H1 (cell line): ENCODE measurements at regions of chr15 and their contacts with region 1.

Region 1: DNA sequence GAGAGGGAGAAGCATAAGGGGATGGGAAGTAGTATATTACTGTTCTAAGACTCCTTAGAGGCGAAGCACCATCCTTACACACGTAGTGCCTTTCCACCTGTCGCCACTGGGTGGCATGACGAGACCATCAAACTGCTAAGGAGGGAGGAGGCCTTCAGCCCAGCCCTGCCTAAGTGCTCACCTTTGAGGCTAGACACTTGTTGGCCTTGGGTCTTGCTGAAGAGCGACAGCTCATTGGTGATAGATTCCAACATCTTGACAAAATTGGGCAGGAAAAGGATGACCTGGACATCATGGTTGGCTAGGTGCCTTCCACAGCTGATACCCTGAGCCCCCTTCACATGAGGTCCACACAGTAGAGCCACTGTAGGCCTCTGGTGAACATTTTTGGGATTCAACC is 19.6 kb downstream of the CLK3 start:
- DNase-seq: peak in 1 of 2 experiments; percentile 84
- H3K4me3 ChIP-seq: no peak overlapping the region
- H3K27ac ChIP-seq: no peak overlapping the region
- H3K4me1 ChIP-seq: no peaks in the 10 kb centered on the region
- H3K27me3 ChIP-seq: no peaks in the 10 kb centered on the region
- CTCF ChIP-seq: peak; percentile 92 to 97 (median 97)
- EP300 ChIP-seq: no peak
- POLR2A ChIP-seq: no peak
- RAD21 ChIP-seq: peak; percentile 97 to 98

Region 2: DNA sequence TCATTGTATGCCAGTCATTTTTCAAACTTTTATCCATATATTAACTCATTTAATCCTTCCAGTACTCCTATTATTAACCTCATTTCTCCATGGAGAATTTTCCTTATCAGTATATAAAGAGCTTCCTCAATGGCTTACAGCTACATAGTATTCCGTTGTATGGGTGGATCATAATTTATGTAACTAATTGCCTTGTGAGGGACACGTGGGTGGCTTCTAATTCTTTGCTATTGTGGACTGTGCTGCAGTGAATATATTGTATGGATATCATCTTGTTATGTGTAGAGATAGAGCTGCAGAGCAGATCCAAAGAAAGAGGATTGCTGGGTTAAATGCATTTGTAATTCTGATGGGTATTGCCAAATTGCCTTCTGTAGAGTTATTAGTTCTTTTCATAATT is 615.5 kb before region 1 on chr15:
- CTCF ChIA-PET with region 1: no interaction called
- POLR2A ChIA-PET with region 1: no interaction called
- DNase-seq: no peak
- H3K4me3 ChIP-seq: no peak overlapping the region
- H3K27ac ChIP-seq: no peak overlapping the region
- H3K4me1 ChIP-seq: no peaks in the 10 kb centered on the region
- H3K27me3 ChIP-seq: no peaks in the 10 kb centered on the region
- CTCF ChIP-seq: no peak
- EP300 ChIP-seq: no peak
- POLR2A ChIP-seq: no peak
- RAD21 ChIP-seq: no peak

Region 3: DNA sequence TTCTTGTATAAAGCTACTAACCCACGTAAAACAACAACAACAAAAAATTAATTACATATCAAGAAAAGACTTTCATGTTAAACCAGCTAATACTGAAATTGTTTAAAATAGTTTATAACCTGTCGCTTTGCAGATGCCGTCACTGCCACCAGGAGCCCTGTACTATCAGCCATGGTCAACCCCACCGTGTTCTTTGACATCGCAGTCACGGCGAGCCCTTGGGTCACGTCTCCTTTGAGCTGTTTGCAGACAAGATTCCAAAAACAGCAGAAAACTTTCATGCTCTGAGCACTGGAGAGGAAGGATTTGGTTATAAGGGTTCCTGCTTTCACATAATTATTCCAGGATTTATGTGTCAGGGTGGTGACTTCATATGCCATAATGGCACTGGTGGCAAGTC is 273.8 kb before region 1 on chr15:
- CTCF ChIA-PET with region 1: no interaction called
- POLR2A ChIA-PET with region 1: no interaction called
- DNase-seq: no peak
- H3K4me3 ChIP-seq: no peak overlapping the region
- H3K27ac ChIP-seq: no peak overlapping the region
- H3K4me1 ChIP-seq: peaks cover 6 to 23% (median 13%) of the 10 kb centered on the region in 4 experiments
- H3K27me3 ChIP-seq: peaks cover 0 to 12% (median 8%) of the 10 kb centered on the region in 4 experiments; a peak in 5 of 7 replicates
- CTCF ChIP-seq: no peak
- EP300 ChIP-seq: no peak
- POLR2A ChIP-seq: no peak
- RAD21 ChIP-seq: no peak

Region 4: GRCh38 chr15:74551714-74552113 is 83.5 kb before region 1 on chr15:
- CTCF ChIA-PET with region 1: no interaction called
- POLR2A ChIA-PET with region 1: no interaction called
- DNase-seq: no peak
- H3K4me3 ChIP-seq: no peak overlapping the region
- H3K27ac ChIP-seq: no peak overlapping the region
- H3K4me1 ChIP-seq: peaks cover 0 to under 1% (median 0%) of the 10 kb centered on the region in 4 experiments; a peak in 1 of 7 replicates
- H3K27me3 ChIP-seq: no peaks in the 10 kb centered on the region
- CTCF ChIP-seq: no peak
- EP300 ChIP-seq: no peak
- POLR2A ChIP-seq: no peak
- RAD21 ChIP-seq: no peak

Region 5: GRCh38 chr15:74615508-74616365 is 19.5 kb before region 1 on chr15 and contains the start of gene CLK3:
- CTCF ChIA-PET with region 1: interaction called, 538 read pairs
- POLR2A ChIA-PET with region 1: interaction called, 4 read pairs
- DNase-seq: peak; percentile 79 to 98
- H3K4me3 ChIP-seq: peak within 1 kb of the TSS; percentile 80 to 96 (median 84)
- H3K27ac ChIP-seq: peak within 1 kb of the TSS; percentile 68
- H3K4me1 ChIP-seq: peaks cover 0 to 5% (median 2%) of the 10 kb centered on the region in 4 experiments; a peak in 5 of 7 replicates
- H3K27me3 ChIP-seq: peaks cover 0 to 15% (median 11%) of the 10 kb centered on the region in 4 experiments; a peak in 4 of 7 replicates
- CTCF ChIP-seq: peak in 1 of 3 experiments; percentile 11; a peak in 1 of 4 replicates
- EP300 ChIP-seq: 0 out of 3 replicates have a peak, but pooled peaks of 1 of the 2 experiments have one; percentile 17
- POLR2A ChIP-seq: peak in 1 of 2 experiments; percentile 85; a peak in 2 of 3 replicates
- RAD21 ChIP-seq: peak in 1 of 2 experiments; percentile 14; a peak in 1 of 4 replicates
- total RNA-seq, gene CLK3: 42.4 and 43.5 TPM in 2 replicates

Region 6: GRCh38 chr15:74653426-74654123 is 18.3 kb after region 1 on chr15:
- CTCF ChIA-PET with region 1: interaction called, 538 read pairs
- POLR2A ChIA-PET with region 1: interaction called, 3 read pairs
- DNase-seq: no peak
- H3K4me3 ChIP-seq: no peak overlapping the region
- H3K27ac ChIP-seq: no peak overlapping the region
- H3K4me1 ChIP-seq: no peaks in the 10 kb centered on the region
- H3K27me3 ChIP-seq: no peaks in the 10 kb centered on the region
- CTCF ChIP-seq: no peak
- EP300 ChIP-seq: no peak
- POLR2A ChIP-seq: no peak
- RAD21 ChIP-seq: no peak

Region 7: GRCh38 chr15:74664028-74664616 is 28.9 kb after region 1 on chr15:
- CTCF ChIA-PET with region 1: interaction called, 41 read pairs
- POLR2A ChIA-PET with region 1: interaction called, 3 read pairs
- DNase-seq: no peak
- H3K4me3 ChIP-seq: no peak overlapping the region
- H3K27ac ChIP-seq: no peak overlapping the region
- H3K4me1 ChIP-seq: 0 out of 7 replicates have a peak, but pooled peaks cover 0 to 2% (median 0%) of the 10 kb centered on the region in 4 experiments
- H3K27me3 ChIP-seq: no peaks in the 10 kb centered on the region
- CTCF ChIP-seq: no peak
- EP300 ChIP-seq: no peak
- POLR2A ChIP-seq: no peak
- RAD21 ChIP-seq: no peak

Region 8: GRCh38 chr15:74723754-74724334 is 88.6 kb after region 1 on chr15:
- CTCF ChIA-PET with region 1: interaction called, 11 read pairs
- POLR2A ChIA-PET with region 1: interaction called, 5 read pairs
- DNase-seq: peak in 1 of 2 experiments; percentile 49
- H3K4me3 ChIP-seq: no peak overlapping the region
- H3K27ac ChIP-seq: no peak overlapping the region
- H3K4me1 ChIP-seq: peaks cover 0 to 5% (median 0%) of the 10 kb centered on the region in 4 experiments; a peak in 3 of 7 replicates
- H3K27me3 ChIP-seq: peaks cover 11 to 31% (median 26%) of the 10 kb centered on the region in 4 experiments
- CTCF ChIP-seq: no peak
- EP300 ChIP-seq: no peak
- POLR2A ChIP-seq: no peak
- RAD21 ChIP-seq: no peak

Region 9: GRCh38 chr15:74746389-74746788 is 111.2 kb after region 1 on chr15:
- CTCF ChIA-PET with region 1: interaction called, 1,439 read pairs
- POLR2A ChIA-PET with region 1: interaction called, 3 read pairs
- DNase-seq: no peak
- H3K4me3 ChIP-seq: no peak overlapping the region
- H3K27ac ChIP-seq: no peak overlapping the region
- H3K4me1 ChIP-seq: peaks cover 0 to 4% (median 0%) of the 10 kb centered on the region in 4 experiments; a peak in 2 of 7 replicates
- H3K27me3 ChIP-seq: peaks cover 0 to 6% (median 3%) of the 10 kb centered on the region in 4 experiments; a peak in 2 of 7 replicates
- CTCF ChIP-seq: no peak
- EP300 ChIP-seq: no peak
- POLR2A ChIP-seq: no peak
- RAD21 ChIP-seq: no peak